OCI-LY7 (cell line): ENCODE measurements at regions of chr17 and their contacts with region 1.

Region 1: GRCh38 chr17:38667099-38667786 is 7.5 kb downstream of the EPOP start:
- DNase-seq: peak; percentile 78
- H3K4me3 ChIP-seq: no peak overlapping the region
- H3K27ac ChIP-seq: no peak overlapping the region
- H3K4me1 ChIP-seq: peaks cover 4% of the 10 kb centered on the region
- CTCF ChIP-seq: peak; percentile 100

Region 2: GRCh38 chr17:38428112-38428642 is 239.1 kb before region 1 on chr17 and contains the start of gene ARHGAP23:
- CTCF ChIA-PET with region 1: no interaction called
- POLR2A ChIA-PET with region 1: no interaction called
- intact Hi-C with region 1: loop called (anchors 10 kb)
- DNase-seq: peak; percentile 51
- H3K4me3 ChIP-seq: peak within 1 kb of the TSS; percentile 74
- H3K27ac ChIP-seq: peak within 1 kb of the TSS; percentile 31
- H3K4me1 ChIP-seq: peaks cover 27% of the 10 kb centered on the region
- CTCF ChIP-seq: no peak
- total RNA-seq, gene ARHGAP23: 18.6 and 25.4 TPM in 2 replicates

Region 3: DNA sequence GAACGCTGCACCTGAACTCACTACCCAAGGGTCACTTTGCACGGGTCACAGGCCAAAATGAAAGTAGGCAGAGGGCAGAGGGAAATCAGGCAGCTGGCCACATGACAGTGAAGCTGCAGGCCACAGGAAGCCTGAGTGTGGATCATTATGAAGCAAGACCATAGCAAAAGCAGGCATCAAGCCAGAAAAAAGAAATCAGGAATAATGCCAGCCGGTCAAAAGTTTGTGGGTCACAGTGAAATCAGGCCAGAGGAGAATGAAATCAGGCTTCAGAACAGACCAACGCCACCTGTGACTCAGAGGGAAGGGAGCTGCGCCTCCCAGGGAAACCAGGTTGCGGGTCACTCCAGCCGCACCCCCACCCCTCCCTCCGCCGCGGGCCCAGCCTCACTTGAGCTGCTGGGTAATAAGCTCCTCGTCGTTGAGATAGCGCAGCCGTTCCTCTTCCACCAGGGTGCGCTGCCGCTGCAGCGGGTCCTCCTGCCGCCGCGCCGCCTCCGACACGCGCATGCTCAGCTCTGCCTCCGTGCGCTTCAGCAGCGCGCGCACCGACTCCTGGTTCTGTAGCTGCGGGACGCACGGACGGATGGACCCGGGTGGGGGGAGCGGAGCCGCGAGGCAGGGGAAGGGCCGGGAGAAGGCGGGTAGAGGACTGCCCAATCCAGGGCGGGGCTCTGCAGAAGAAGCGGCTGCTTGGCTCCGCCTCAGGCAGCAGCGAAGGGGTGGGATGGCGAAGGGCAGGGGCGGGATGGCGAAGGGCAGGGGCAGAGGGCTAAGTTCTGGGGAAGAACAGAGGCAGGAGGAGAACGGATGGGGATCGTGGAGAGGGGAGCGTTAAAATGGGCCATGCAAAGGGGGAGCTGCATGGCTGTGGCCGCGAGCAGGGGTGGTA is 109.2 kb before region 1 on chr17:
- CTCF ChIA-PET with region 1: interaction called, 26 read pairs
- POLR2A ChIA-PET with region 1: interaction called, 4 read pairs
- intact Hi-C with region 1: loop called (anchors 1 kb)
- DNase-seq: peak; percentile 93
- H3K4me3 ChIP-seq: peak overlapping the region; percentile 64
- H3K27ac ChIP-seq: no peak overlapping the region
- H3K4me1 ChIP-seq: peaks cover 23% of the 10 kb centered on the region
- CTCF ChIP-seq: peak; percentile 86

Region 4: GRCh38 chr17:38605888-38606645 is 61.2 kb before region 1 on chr17 and contains the start of gene SRCIN1:
- CTCF ChIA-PET with region 1: no interaction called
- POLR2A ChIA-PET with region 1: no interaction called
- intact Hi-C with region 1: loop called (anchors 5 kb)
- DNase-seq: peak; percentile 72
- H3K4me3 ChIP-seq: peak within 1 kb of the TSS; percentile 72
- H3K27ac ChIP-seq: no peak within 1 kb of the TSS
- H3K4me1 ChIP-seq: no peaks in the 10 kb centered on the region
- CTCF ChIP-seq: peak; percentile 99
- total RNA-seq, gene SRCIN1: 0.15 and 1.5 TPM in 2 replicates

Region 5: DNA sequence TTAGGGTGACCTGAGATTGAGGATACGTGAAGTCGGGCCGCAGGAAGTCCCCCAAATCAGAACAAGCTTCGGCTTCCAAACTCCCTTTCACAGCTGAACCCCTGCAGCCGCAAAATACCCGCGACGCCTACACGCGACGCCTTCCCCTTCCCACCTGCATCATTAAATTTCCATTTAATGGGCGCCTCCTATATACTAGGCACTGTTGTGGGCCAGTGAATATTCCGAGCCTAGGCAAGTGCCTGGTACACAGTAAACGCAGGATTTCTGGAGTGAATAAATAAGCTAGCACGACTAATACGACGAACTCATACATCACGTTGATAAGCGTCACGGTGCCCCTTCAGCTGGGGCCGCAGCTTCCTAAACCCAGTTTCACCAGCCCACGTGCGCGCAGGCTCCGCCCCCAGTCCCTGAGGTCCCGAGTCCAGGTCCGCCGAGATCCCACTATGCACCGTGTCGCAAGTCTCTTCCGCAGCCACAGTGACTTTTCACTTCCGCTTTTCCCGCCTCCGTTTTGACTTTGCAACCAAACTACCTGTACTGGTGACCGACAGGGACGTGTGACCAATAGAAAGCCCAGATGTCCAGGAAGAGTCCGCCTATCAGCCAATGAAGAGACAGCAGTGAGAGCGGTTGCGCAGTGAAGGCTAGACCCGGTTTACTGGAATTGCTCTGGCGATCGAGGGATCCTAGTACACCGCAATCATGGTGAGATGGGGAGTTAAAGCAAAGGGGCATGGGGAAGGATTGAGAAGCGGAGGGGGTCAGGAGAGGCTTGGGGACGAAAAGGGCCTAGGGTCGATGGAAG is 85.1 kb after region 1 on chr17 and contains the start of gene PSMB3:
- CTCF ChIA-PET with region 1: no interaction called
- POLR2A ChIA-PET with region 1: no interaction called
- intact Hi-C with region 1: no loop called
- DNase-seq: peak; percentile 100
- H3K4me3 ChIP-seq: peak within 1 kb of the TSS; percentile 79
- H3K27ac ChIP-seq: peak within 1 kb of the TSS; percentile 76
- H3K4me1 ChIP-seq: peaks cover 40% of the 10 kb centered on the region
- CTCF ChIP-seq: no peak
- total RNA-seq, gene PSMB3: 290 and 348 TPM in 2 replicates